Activated T-helper 2 cell treated with anti-CD3 and anti-CD28 coated beads, Interferon-gamma antibody, Interleukin-2, Interleukin-4, amounts not matched to agents 10 μg/mL and 5 μg/mL and 100 μg/mL, durations not matched to agents 14 hours and 24 hours and 36 hours (primary cell): ENCODE measurements at regions of chr17 and their contacts with region 1.

Region 1: GRCh38 chr17:63478791-63479494 is 2.1 kb downstream of the ACE start:
- DNase-seq: peak; percentile 63
- H3K4me3 Mint-ChIP-seq: no peak overlapping the region
- H3K27ac Mint-ChIP-seq: no peak overlapping the region
- H3K4me1 Mint-ChIP-seq: peaks cover 2% of the 10 kb centered on the region
- H3K27me3 Mint-ChIP-seq: peaks cover 32% of the 10 kb centered on the region

Region 2: DNA sequence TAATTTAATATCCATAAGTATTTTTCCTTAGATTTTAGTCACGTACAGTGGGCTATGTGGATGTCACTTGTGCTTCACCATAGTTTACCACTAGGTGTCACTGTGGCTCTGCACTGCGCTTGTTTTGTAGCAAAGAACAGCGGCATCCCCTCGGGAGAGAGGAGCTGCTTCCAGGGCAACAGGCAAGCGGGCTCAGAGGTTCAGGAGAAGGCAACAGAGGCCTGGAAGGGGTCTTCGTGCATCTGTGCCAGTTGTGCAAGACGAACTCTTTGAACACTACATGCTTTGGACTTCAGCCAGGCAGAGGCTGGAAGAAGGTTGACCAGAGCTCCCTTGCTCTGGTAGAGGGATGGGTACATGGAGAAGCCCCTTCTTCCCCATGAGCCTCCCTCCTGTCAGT is 53.5 kb before region 1 on chr17:
- intact Hi-C with region 1: loop called (anchors 1 kb)
- DNase-seq: peak; percentile 47
- H3K4me3 Mint-ChIP-seq: no peak overlapping the region
- H3K27ac Mint-ChIP-seq: no peak overlapping the region
- H3K4me1 Mint-ChIP-seq: peaks cover 21% of the 10 kb centered on the region
- H3K27me3 Mint-ChIP-seq: peaks cover 15% of the 10 kb centered on the region

Region 3: DNA sequence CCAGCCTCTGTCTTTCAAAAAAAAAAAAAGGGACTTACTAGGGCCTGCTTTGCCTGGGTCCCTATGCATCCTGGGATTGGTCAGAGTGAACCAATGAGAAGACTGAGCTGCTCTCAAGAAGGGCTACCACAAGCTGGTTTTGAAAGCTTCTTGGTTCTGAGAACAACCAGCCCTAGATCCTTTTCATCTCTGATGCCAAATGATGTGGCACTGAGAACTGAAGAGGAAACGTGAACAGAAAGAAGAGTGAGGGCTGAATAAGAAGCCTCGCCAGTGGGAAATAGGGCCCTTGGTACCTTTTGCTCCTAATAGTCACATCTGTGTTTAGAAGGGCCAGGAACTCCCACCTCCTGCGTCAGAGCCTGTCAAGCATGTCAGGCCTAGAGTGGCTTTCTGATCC is 132.4 kb after region 1 on chr17:
- intact Hi-C with region 1: loop called (anchors 5 kb)
- DNase-seq: no peak
- H3K4me3 Mint-ChIP-seq: no peak overlapping the region
- H3K27ac Mint-ChIP-seq: peak overlapping the region; percentile 68
- H3K4me1 Mint-ChIP-seq: peaks cover 8% of the 10 kb centered on the region
- H3K27me3 Mint-ChIP-seq: no peaks in the 10 kb centered on the region

Region 4: GRCh38 chr17:63946440-63947367 is 467.8 kb after region 1 on chr17:
- intact Hi-C with region 1: no loop called
- DNase-seq: peak; percentile 42
- H3K4me3 Mint-ChIP-seq: peak overlapping the region; percentile 23
- H3K27ac Mint-ChIP-seq: peak overlapping the region; percentile 84
- H3K4me1 Mint-ChIP-seq: peaks cover 12% of the 10 kb centered on the region
- H3K27me3 Mint-ChIP-seq: peaks cover 2% of the 10 kb centered on the region